ENCODE measurements at regions of chr22 and their contacts with region 1.

Region 1: DNA sequence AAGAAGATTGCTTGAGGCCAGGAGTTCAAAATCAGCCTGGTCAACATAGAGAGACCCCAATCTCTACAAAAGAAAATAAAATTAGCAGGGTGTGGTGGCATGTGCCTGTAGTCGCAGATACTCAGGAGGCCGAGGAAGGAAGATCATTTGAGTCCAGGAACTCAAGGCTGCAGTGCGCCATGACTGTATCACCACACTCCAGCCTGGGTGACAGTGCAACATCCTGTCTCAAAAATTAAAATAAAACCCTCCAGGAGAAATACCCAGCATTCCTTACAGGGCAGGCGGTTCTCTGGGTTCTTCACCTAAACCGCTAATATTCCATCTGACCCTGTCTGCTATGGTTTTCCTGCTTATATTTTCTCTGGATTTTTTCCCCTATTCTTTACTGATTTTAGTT is 13.5 kb downstream of the TCF20 start:
- DNase-seq: no peak
- ATAC-seq: no peak
- H3K4me3 ChIP-seq: no peak overlapping the region
- H3K27ac ChIP-seq: no peak overlapping the region
- H3K4me1 ChIP-seq: no peaks in the 10 kb centered on the region
- H3K27me3 ChIP-seq: no peaks in the 10 kb centered on the region
- CTCF ChIP-seq: no peak

Region 2: GRCh38 chr22:42142771-42143461 is 114.0 kb before region 1 on chr22:
- intact Hi-C with region 1: no loop called
- DNase-seq: peak in 1 of 6 donors; percentile 60
- ATAC-seq: no peak
- H3K4me3 ChIP-seq: no peak overlapping the region
- H3K27ac ChIP-seq: no peak overlapping the region
- H3K4me1 ChIP-seq: no peaks in the 10 kb centered on the region
- H3K27me3 ChIP-seq: no peaks in the 10 kb centered on the region
- CTCF ChIP-seq: no peak

Region 3: GRCh38 chr22:42236268-42236667 is 20.7 kb before region 1 on chr22:
- intact Hi-C with region 1: loop called in 1 of 3 experiments (anchors 2 kb)
- DNase-seq: no peak
- ATAC-seq: no peak
- H3K4me3 ChIP-seq: no peak overlapping the region
- H3K27ac ChIP-seq: no peak overlapping the region
- H3K4me1 ChIP-seq: no peaks in the 10 kb centered on the region
- H3K27me3 ChIP-seq: no peaks in the 10 kb centered on the region
- CTCF ChIP-seq: no peak